Left lung (tissue), 14 donors: ENCODE measurements at regions of chr11 and their contacts with region 1.

Region 1: DNA sequence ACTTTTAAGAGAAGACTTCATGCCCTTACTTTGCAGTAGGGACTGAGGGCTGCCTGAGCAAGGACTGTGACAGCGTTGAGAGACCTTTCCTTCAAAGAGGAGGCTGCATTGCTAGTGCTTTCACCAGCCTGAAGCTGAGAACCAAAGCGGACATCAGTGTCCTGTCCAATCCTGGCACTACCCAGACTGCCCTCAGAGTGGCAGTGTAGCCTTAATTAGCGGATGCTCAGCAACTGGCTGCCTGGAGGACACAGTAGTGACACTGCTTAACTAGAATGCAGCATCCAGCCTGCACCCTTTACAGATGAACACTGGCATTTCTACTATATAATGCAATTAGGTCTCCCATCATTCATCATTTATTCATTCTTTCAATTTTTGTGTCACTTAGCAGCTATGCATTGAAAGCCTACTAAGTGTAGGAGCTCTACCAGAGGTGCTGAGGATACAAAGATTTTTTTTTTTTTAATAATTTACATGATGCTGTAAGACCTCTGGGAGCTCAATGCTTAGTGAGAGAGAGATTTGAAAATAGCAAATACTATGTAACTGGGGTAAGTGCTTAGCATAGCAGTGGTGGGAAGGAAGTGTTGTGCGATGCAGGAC is 36.9 kb upstream of the SLC36A4 start:
- DNase-seq: peak; percentile 59 to 86 (median 69)
- ATAC-seq: peak; percentile 100
- H3K4me3 ChIP-seq: no peak overlapping the region
- H3K27ac ChIP-seq: no peak overlapping the region
- H3K4me1 ChIP-seq: no peaks in the 10 kb centered on the region
- H3K27me3 ChIP-seq: no peaks in the 10 kb centered on the region
- CTCF ChIP-seq: peak; percentile 88 to 97

Region 2: GRCh38 chr11:93340223-93340622 is 105.5 kb after region 1 on chr11:
- intact Hi-C with region 1: no loop called
- DNase-seq: peak in 1 of 4 donors; percentile 5
- ATAC-seq: peak; percentile 60
- H3K4me3 ChIP-seq: no peak overlapping the region
- H3K27ac ChIP-seq: no peak overlapping the region
- H3K4me1 ChIP-seq: no peaks in the 10 kb centered on the region
- H3K27me3 ChIP-seq: no peaks in the 10 kb centered on the region
- CTCF ChIP-seq: no peak

Region 3: GRCh38 chr11:93370260-93370659 is 135.6 kb after region 1 on chr11:
- intact Hi-C with region 1: no loop called
- DNase-seq: no peak
- ATAC-seq: no peak
- H3K4me3 ChIP-seq: no peak overlapping the region
- H3K27ac ChIP-seq: no peak overlapping the region
- H3K4me1 ChIP-seq: no peaks in the 10 kb centered on the region
- H3K27me3 ChIP-seq: no peaks in the 10 kb centered on the region
- CTCF ChIP-seq: no peak

Region 4: GRCh38 chr11:93543292-93543977 is 308.7 kb after region 1 on chr11 and contains the start of gene SMCO4:
- intact Hi-C with region 1: loop called in 1 of 2 experiments (anchors 10 kb)
- DNase-seq: peak; percentile 69 to 97 (median 88)
- ATAC-seq: peak; percentile 92
- H3K4me3 ChIP-seq: peak within 1 kb of the TSS; percentile 73 to 75
- H3K27ac ChIP-seq: peak within 1 kb of the TSS; percentile 84 to 90
- H3K4me1 ChIP-seq: peaks cover 12 to 49% of the 10 kb centered on the region in 2 donors
- H3K27me3 ChIP-seq: no peaks in the 10 kb centered on the region
- CTCF ChIP-seq: peak; percentile 62 to 80
- polyA plus RNA-seq, gene SMCO4: 14.4 to 20.9 (median 18.1) TPM

Region 5: GRCh38 chr11:93652161-93652597 is 417.5 kb after region 1 on chr11:
- intact Hi-C with region 1: loop called in 1 of 2 experiments (anchors 5 kb)
- DNase-seq: peak in 2 of 4 donors; percentile 45 to 49
- ATAC-seq: peak; percentile 23
- H3K4me3 ChIP-seq: no peak overlapping the region
- H3K27ac ChIP-seq: no peak overlapping the region
- H3K4me1 ChIP-seq: peaks cover 0 to 3% of the 10 kb centered on the region in 2 donors
- H3K27me3 ChIP-seq: no peaks in the 10 kb centered on the region
- CTCF ChIP-seq: peak; percentile 64 to 86